Common myeloid progenitor, CD34-positive (primary cell): ENCODE measurements at regions of chr16 and their contacts with region 1.

Region 1: DNA sequence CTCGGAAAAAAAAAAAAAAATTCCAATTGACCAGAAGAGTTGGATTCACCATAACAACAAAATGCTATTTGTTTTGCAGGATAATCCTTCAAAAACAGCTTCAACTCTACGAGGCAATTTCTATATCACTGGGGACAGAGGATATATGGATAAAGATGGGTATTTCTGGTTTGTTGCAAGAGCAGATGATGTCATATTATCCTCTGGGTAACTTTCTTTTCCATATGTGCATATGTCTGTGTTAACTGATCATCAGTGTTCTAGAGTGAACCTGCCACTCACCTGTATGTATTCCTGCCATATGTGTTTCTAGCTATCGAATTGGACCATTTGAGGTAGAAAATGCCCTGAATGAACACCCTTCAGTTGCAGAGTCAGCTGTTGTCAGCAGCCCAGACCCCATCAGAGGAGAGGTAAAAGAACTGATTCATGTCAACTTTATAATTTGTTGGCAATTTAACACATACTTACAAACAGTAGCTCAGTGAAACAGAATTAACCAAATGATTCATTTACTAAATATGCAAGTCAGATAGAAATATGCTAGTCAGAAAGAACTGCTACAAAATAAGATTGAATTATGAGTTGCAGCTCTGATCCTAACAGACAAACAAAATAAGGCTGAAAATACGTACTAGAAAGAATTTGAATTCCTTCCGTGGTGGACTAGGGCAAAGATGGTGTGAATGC is 14.2 kb downstream of the ERI2 start:
- DNase-seq: no peak
- H3K4me3 ChIP-seq: no peak overlapping the region
- H3K27ac ChIP-seq: no peak overlapping the region
- H3K4me1 ChIP-seq: no peaks in the 10 kb centered on the region
- H3K27me3 ChIP-seq: no peaks in the 10 kb centered on the region

Region 2: DNA sequence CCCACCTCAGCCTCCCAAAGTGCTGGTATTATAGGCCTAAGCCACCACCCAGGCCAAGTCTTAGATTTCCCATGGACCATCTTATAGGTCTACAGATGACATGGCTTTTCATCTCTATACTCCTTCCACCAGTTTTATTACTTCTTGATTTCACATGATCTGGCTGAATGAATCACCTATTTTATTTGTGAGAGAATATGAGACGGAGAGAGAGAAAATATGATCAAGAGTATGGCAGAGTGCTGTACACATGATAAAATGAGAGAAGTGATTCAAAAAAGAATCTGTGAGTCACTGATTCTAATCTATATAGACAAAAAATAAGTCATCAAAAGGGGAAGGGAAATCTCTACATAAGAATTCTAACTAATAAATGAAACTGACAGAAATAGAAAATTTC is 108.3 kb before region 1 on chr16:
- CTCF ChIA-PET with region 1: no interaction called
- POLR2A ChIA-PET with region 1: no interaction called
- DNase-seq: peak in 1 of 3 donors; percentile 17
- H3K4me3 ChIP-seq: no peak overlapping the region
- H3K27ac ChIP-seq: no peak overlapping the region
- H3K4me1 ChIP-seq: no peaks in the 10 kb centered on the region
- H3K27me3 ChIP-seq: peaks cover 0 to 3% (median 0%) of the 10 kb centered on the region in 5 experiments

Region 3: GRCh38 chr16:20753727-20754126 is 38.3 kb before region 1 on chr16:
- CTCF ChIA-PET with region 1: no interaction called
- POLR2A ChIA-PET with region 1: no interaction called
- DNase-seq: no peak
- H3K4me3 ChIP-seq: no peak overlapping the region
- H3K27ac ChIP-seq: no peak overlapping the region
- H3K4me1 ChIP-seq: no peaks in the 10 kb centered on the region
- H3K27me3 ChIP-seq: no peaks in the 10 kb centered on the region

Region 4: DNA sequence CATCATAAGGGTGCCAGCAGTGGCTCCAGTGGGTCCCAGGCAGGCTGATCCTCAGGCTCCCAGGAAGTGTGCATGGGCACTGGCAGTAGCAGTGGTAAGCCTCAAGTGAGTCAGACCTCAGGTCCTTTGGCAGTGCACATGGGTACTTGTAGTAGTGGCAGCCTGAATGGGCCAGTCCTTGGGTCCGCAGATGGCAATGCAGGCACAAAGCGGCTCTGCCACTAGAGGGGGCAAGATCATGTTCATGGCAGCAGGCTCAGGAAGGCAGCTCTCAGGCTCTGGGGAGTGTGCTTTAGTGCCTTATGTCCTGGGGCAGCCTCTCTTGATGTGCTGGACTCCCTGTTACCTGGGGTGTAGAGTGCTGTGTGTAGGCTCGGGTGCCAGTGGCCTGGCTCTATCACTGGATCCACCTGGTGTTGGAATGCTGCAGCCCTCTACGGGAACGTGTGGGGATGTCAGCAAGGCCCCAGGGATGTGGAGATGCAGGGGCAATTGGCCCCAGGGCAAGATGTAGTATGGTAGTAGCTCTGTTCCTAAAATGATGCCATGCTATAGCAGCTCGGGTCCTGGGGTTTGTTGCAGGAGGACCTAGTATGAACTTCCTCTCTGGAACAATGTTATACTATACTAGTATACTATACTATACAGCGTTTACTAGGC is 17.2 kb before region 1 on chr16:
- CTCF ChIA-PET with region 1: interaction called, 67 read pairs
- POLR2A ChIA-PET with region 1: no interaction called
- DNase-seq: peak; percentile 72 to 86 (median 80)
- H3K4me3 ChIP-seq: no peak overlapping the region
- H3K27ac ChIP-seq: no peak overlapping the region
- H3K4me1 ChIP-seq: peaks cover 0 to 5% (median 0%) of the 10 kb centered on the region in 4 experiments
- H3K27me3 ChIP-seq: no peaks in the 10 kb centered on the region